Natural killer cell (primary cell): ENCODE measurements at regions of chr1 and their contacts with region 1.

Region 1: DNA sequence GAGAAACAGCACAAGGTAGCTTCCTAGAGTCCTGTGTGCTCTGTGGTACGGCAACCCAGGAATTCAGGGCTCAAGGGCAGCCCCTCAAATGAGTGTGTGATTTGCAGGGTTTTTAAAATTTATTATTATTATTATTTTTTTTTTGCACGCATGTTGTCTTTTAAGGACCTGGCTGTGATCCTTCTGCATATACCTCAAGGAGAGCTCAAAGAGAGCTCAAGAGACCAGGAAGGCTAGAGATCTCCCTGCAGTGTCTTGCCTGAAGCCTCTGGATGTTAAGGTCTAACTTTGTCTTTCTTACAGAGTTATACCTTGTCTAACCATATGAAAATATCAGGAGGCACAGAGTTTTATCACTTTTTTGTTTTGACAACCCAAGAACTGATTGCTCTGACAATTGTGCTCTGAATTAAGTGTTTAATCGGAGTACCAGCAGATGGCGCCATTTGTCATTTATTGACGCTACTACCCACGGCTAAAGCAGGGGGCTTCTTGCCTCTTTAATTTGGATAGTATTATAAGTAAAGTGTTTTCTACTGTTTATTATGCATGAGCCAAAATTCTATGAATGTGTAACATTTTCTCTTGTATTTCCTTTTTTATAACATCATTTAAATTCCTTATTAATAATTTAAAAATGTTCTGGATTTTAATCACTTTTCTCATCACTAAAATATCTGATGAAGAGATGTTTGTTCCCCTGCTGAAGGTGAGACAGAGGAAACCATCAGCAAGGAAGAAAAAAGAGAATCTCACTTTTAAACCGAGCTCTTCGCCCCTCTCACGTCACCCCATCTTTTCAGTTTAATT is 35.8 kb upstream of the LMO4 start:
- DNase-seq: peak; percentile 41 to 83
- ATAC-seq: peak in 2 of 3 donors; percentile 57 to 75
- H3K4me3 ChIP-seq: no peak overlapping the region
- H3K4me3 Mint-ChIP-seq: no peak overlapping the region
- H3K27ac ChIP-seq: no peak overlapping the region
- H3K27ac Mint-ChIP-seq: no peak overlapping the region
- H3K4me1 ChIP-seq: no peaks in the 10 kb centered on the region
- H3K4me1 Mint-ChIP-seq: no peaks in the 10 kb centered on the region
- H3K27me3 ChIP-seq: no peaks in the 10 kb centered on the region
- H3K27me3 Mint-ChIP-seq: peaks cover 7 to 12% of the 10 kb centered on the region in 2 donors
- CTCF ChIP-seq: peak; percentile 91

Region 2: DNA sequence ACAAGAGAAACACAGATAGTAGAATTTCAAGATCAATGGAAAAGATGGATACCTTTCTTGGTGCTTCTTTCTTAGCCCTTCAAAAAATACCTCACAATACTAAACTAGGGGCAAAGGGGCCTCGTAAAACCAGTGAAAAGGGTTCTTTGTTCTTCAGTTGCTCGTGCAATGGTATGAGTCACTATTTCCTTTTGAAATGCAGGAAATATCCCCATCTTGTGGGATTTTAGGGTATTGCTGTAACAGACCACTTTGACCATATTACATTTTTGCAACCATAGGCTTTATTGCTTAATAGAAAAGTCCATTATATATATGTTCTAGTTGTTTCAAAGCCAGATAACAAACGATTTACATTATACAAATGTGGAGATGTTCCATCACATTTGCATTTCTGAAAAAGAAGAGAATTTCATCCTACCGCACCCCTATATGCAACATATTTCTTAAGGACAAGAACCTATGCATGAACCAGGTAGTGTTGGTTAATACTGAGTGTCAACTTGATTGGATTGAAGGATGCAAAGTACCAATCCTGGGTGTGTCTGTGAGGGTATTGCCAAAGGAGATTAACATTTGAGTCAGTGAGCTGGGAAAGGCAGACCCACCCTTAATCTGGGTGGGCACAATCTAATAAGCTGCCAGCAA is 1302.6 kb after region 1 on chr1:
- intact Hi-C with region 1: loop called (anchors 2 kb)
- DNase-seq: peak in 1 of 2 donors; percentile 56
- ATAC-seq: peak in 1 of 3 donors; percentile 34
- H3K4me3 ChIP-seq: no peak overlapping the region
- H3K4me3 Mint-ChIP-seq: no peak overlapping the region
- H3K27ac ChIP-seq: no peak overlapping the region
- H3K27ac Mint-ChIP-seq: no peak overlapping the region
- H3K4me1 ChIP-seq: no peaks in the 10 kb centered on the region
- H3K4me1 Mint-ChIP-seq: no peaks in the 10 kb centered on the region
- H3K27me3 ChIP-seq: no peaks in the 10 kb centered on the region
- H3K27me3 Mint-ChIP-seq: peaks cover 8% of the 10 kb centered on the region in 2 donors
- CTCF ChIP-seq: peak; percentile 15